GM13976 (cell line): ENCODE measurements at regions of chr6 and their contacts with region 1.

Region 1: GRCh38 chr6:41798901-41799558 is 11.5 kb downstream of the TOMM6 start:
- DNase-seq: no peak
- CTCF ChIP-seq: no peak

Region 2: GRCh38 chr6:41936073-41936837 is 137.2 kb after region 1 on chr6:
- in situ Hi-C with region 1: no loop called
- DNase-seq: peak; percentile 80
- CTCF ChIP-seq: peak; percentile 70

Region 3: GRCh38 chr6:42043787-42044475 is 244.9 kb after region 1 on chr6:
- in situ Hi-C with region 1: loop called (anchors 5 kb)
- DNase-seq: peak; percentile 86
- CTCF ChIP-seq: peak; percentile 93

Region 4: GRCh38 chr6:42217519-42218367 is 418.7 kb after region 1 on chr6 and contains the start of gene MRPS10:
- in situ Hi-C with region 1: no loop called
- DNase-seq: peak; percentile 93
- CTCF ChIP-seq: no peak